Heart right ventricle (tissue), 16 donors: ENCODE measurements at regions of chr6 and their contacts with region 1.

Region 1: GRCh38 chr6:13097454-13097853 is 230.9 kb downstream of the TBC1D7 start:
- DNase-seq: peak in 1 of 2 donors; percentile 44
- ATAC-seq: peak in 7 of 8 donors; percentile 46 to 82 (median 68)
- H3K4me3 ChIP-seq: no peak overlapping the region
- H3K27ac ChIP-seq: peak overlapping the region in 7 of 10 donors; percentile 2 to 52 (median 16)
- H3K4me1 ChIP-seq: peaks cover 0 to 50% (median 24%) of the 10 kb centered on the region in 9 donors
- H3K27me3 ChIP-seq: no peaks in the 10 kb centered on the region
- CTCF ChIP-seq: no peak

Region 2: DNA sequence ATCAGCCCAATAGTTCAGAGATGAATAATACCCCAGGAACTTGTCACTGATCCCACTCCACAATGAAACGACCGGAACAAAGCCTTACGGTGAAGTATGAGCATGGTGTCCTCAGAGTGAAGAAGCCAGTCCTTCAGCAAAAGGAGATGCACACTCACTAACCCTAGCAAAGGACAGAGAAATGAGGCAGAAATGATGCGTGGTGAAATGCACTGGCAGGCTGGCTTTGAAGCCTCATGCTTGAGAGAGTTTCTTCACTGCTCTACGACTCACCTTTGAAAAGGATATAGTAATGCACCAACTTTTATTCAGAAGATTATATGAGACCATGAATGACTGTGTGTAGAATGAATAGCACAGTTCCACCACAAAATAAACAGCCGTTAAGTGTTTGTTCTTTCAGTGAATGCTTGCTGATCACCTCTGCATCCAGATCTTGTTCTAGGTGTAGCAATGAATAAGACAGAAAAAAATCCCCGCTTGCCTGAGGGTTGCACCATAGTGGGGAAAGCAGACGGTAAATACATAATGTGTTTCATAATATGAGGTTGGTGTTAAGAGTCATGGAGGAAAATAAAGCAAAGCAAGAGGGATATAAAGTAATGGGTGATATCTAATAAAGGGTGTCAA is 306.0 kb before region 1 on chr6:
- intact Hi-C with region 1: no loop called
- DNase-seq: no peak
- ATAC-seq: no peak
- H3K4me3 ChIP-seq: no peak overlapping the region
- H3K27ac ChIP-seq: no peak overlapping the region
- H3K4me1 ChIP-seq: no peaks in the 10 kb centered on the region
- H3K27me3 ChIP-seq: peaks cover 0 to 5% (median 0%) of the 10 kb centered on the region in 7 donors
- CTCF ChIP-seq: no peak

Region 3: DNA sequence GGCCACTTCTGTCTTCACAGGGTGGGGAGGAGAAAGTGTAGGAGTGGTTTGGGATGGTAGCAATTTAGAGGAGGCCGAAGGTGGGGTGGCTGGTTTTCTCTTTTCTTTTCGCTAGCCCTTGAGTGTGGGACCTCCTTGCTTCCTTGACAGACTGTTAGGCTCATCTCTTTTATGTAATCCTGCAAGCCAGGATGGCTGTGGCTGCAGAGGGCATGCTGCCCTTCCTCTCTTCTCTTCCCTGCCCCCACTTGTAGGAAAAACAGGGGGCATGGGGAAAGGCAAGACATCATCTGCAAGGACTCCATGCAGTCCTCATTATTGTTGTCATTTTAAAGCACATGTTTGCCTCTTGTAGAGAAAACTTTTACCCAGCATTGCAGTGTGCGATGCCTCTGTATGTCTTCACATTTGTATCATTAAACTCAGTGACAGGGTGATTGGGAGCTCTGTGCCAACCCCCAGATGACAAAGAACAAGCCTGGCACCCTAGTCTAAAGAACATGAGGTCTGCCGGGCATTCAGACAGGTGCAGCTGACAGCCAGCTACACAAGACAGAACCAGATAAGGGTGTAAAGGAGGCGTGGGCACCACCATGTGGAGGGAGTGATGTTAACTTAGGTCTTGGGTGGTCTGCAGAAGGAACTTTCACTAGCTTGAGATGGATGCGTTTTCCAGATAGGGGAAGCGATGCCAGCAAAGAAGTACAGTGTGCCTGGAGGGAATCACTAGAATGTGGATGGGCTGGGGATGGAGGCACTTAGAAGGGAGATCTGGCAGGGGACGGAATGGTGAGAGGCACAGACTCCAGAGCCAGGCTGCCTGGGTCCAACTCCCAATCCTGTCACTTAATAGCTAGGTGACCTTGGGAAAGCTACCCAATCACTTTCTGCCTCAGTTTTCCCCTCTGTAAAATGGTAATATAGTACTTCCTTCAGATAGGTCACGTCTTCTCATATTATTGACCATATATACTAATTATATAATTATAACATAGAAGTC is 23.3 kb after region 1 on chr6:
- intact Hi-C with region 1: loop called in 1 of 10 experiments (anchors 1 kb)
- DNase-seq: peak; percentile 36 to 64
- ATAC-seq: peak; percentile 78 to 96 (median 91)
- H3K4me3 ChIP-seq: no peak overlapping the region
- H3K27ac ChIP-seq: peak overlapping the region in 7 of 10 donors; percentile 18 to 61 (median 37)
- H3K4me1 ChIP-seq: peaks cover 0 to 32% (median 12%) of the 10 kb centered on the region in 9 donors
- H3K27me3 ChIP-seq: no peaks in the 10 kb centered on the region
- CTCF ChIP-seq: peak in 6 of 9 donors; percentile 7 to 54 (median 35)

Region 4: DNA sequence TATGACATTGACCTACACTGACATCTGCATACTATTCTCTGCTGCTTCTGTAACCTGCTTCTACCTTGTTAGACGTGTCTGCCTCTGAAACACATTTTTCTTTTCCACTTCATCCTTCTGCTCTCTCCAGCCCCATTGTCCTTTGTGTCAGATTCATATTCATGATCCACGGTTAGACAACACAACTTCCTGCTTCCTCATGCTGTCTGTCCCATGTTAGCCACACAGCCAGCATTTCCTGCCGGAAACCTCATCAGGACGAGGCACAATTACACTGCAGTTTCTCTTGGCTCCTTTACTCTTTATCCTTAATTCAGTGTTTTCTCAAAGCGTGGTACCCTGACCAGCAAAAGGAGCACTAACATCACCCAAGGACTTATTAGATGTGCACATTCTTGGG is 80.7 kb after region 1 on chr6:
- intact Hi-C with region 1: no loop called
- DNase-seq: no peak
- ATAC-seq: peak in 1 of 8 donors; percentile 33
- H3K4me3 ChIP-seq: no peak overlapping the region
- H3K27ac ChIP-seq: no peak overlapping the region
- H3K4me1 ChIP-seq: peaks cover 0 to 14% (median 4%) of the 10 kb centered on the region in 9 donors
- H3K27me3 ChIP-seq: no peaks in the 10 kb centered on the region
- CTCF ChIP-seq: no peak

Region 5: GRCh38 chr6:13217206-13217905 is 119.9 kb after region 1 on chr6:
- intact Hi-C with region 1: no loop called
- DNase-seq: no peak
- ATAC-seq: peak in 5 of 8 donors; percentile 40 to 78 (median 61)
- H3K4me3 ChIP-seq: no peak overlapping the region
- H3K27ac ChIP-seq: peak overlapping the region in 6 of 10 donors; percentile 5 to 60 (median 24)
- H3K4me1 ChIP-seq: peaks cover 0 to 28% (median 18%) of the 10 kb centered on the region in 9 donors
- H3K27me3 ChIP-seq: no peaks in the 10 kb centered on the region
- CTCF ChIP-seq: no peak